Activated T-helper 2 cell treated with anti-CD3 and anti-CD28 coated beads, Interferon-gamma antibody, Interleukin-2, Interleukin-4, amounts not matched to agents 10 μg/mL and 5 μg/mL and 100 μg/mL, durations not matched to agents 14 hours and 24 hours and 36 hours (primary cell): ENCODE measurements at regions of chr2 and their contacts with region 1.

Region 1: DNA sequence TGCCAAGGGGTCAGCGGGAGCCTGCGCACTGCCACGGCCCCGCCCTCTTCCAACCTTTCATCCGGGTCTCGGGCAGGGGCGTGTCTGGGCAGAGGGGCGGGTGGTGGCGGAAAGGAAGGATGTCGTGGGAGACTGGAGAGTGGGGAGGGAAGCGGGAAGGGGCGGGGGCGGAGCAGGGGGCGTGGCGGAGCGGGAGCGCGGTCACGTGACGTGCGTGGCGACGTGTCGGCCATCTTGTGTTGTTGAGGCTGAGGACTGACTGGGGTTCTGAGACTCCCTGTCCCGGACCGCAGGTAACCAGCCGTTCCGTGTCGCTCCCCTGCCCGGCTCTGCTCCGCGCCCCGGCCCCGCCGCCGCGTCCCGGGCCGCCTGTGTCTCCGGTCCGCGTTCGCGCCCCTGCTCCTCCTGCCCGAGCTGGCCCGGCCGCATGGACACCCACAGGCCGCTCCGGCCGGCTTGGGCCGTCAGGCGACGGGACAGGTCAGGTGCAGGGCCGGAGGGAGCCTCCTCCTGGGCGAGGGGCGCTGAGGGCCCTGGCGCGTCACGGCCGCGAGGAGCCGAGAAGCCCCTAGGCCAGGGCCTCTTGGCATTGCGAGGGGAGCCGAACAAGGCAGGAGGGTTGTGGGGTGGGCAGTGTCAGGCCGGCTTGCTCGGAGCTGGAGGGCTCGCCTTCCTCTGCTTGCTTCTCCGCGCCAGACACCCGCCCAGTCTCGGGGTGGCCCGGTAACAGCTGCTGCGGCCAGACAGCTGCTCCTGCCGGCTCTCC is at the start of gene GIGYF2:
- DNase-seq: peak; percentile 89
- H3K4me3 Mint-ChIP-seq: peak within 1 kb of the TSS; percentile 98
- H3K27ac Mint-ChIP-seq: peak within 1 kb of the TSS; percentile 81
- H3K4me1 Mint-ChIP-seq: peaks cover 30% of the 10 kb centered on the region
- H3K27me3 Mint-ChIP-seq: peaks cover 5% of the 10 kb centered on the region
- total RNA-seq, gene GIGYF2: 63.7 and 64.7 TPM in 2 replicates

Region 2: DNA sequence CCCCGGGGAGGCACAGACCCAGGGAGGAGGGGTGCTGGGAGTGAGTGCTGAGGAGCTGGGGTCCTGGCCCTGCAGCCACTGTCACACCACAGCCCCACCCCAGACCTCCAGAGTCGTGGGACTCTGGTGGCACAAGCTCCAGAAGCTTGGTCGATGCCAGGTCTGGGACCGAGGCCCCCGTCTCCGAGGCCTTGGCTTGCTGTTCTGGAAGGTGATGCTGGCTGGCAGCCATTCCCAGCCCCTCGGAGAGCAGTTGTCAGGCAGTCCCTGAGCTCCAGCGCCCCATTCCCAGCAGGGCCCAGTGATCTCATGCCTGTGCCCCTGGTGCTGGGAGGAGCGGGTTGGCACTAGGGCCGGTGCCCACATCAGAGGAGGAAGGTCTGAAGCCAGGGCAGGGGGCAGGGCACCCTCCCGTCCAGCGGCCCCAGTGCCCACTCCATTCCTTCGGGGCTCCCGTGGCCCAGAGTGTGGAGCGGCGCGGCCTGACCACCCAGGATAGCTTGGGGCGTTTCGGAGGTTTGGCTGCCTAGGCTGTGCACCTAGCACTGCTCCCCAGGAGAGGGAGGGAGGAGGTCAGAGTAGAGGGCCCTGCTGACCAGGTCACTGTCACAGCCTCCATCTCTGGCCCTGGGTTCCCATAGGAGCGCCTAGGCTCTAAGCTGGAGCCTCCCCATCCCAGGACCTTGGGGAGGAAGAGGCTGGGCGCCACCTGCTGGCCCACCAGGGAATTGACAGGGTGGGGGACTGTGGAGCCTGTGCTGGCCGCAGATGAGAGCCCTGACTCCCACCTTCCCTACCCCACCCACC is 258.1 kb before region 1 on chr2:
- intact Hi-C with region 1: no loop called
- DNase-seq: peak; percentile 23
- H3K4me3 Mint-ChIP-seq: no peak overlapping the region
- H3K27ac Mint-ChIP-seq: no peak overlapping the region
- H3K4me1 Mint-ChIP-seq: peaks cover 4% of the 10 kb centered on the region
- H3K27me3 Mint-ChIP-seq: no peaks in the 10 kb centered on the region

Region 3: DNA sequence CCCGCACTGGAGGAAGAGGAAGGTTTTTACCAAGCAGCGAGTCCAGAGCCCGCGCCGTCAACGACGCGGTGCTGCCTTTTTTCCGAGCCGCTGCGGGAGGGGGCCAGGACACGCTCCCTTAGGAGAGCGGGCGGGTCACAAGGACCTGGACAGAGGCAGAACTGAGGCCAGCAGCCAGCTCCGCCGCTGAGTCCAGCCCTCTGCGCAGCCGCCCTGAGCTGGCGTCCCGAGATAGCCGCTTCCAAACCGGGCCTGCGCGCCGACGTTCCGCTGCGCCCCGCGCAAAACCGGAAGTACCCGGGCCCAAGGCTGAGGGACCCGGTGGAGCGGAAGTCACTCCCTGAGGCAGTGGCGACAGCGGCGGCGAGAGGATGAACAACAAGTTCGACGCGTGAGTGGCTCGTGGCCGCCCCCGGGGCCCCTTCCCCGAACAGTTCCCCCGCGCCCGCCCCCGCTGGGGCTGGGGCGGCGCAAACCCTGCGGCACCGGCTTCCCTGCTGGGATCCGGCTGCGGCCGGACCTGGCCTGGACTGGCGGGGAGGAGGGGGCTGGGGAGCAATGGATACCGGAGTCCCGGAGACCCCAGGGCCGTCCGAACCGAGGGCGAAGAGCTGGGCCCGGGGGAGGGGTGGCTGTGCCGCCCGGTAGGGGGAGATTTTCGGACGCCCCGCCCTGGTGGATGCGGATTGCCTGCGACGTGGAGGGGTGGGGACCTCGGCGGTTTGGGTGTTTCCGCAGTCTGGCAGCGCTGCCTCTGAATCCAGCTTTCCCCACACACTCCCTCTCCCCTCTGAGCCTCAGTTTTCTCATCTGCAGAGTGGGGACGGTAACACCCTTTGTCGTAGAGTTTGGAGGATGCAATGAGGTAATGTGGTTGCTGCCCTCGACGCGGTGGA is 146.7 kb before region 1 on chr2 and contains the starts of genes EIF4E2 and TIGD1:
- intact Hi-C with region 1: loop called (anchors 1 kb)
- DNase-seq: peak; percentile 88
- H3K4me3 Mint-ChIP-seq: peak within 1 kb of the TSS; percentile 99
- H3K27ac Mint-ChIP-seq: peak within 1 kb of the TSS; percentile 100
- H3K4me1 Mint-ChIP-seq: peaks cover 57% of the 10 kb centered on the region
- H3K27me3 Mint-ChIP-seq: no peaks in the 10 kb centered on the region
- total RNA-seq, gene EIF4E2: 85.0 and 88.4 TPM in 2 replicates
- total RNA-seq, gene TIGD1: 7.4 and 9.1 TPM in 2 replicates

Region 4: GRCh38 chr2:232611551-232612218 is 85.6 kb before region 1 on chr2:
- intact Hi-C with region 1: loop called (anchors 5 kb)
- DNase-seq: peak; percentile 48
- H3K4me3 Mint-ChIP-seq: no peak overlapping the region
- H3K27ac Mint-ChIP-seq: no peak overlapping the region
- H3K4me1 Mint-ChIP-seq: no peaks in the 10 kb centered on the region
- H3K27me3 Mint-ChIP-seq: no peaks in the 10 kb centered on the region

Region 5: GRCh38 chr2:233267516-233268245 is 570.4 kb after region 1 on chr2:
- intact Hi-C with region 1: loop called (anchors 10 kb)
- DNase-seq: peak; percentile 84
- H3K4me3 Mint-ChIP-seq: peak overlapping the region; percentile 66
- H3K27ac Mint-ChIP-seq: peak overlapping the region; percentile 93
- H3K4me1 Mint-ChIP-seq: peaks cover 61% of the 10 kb centered on the region
- H3K27me3 Mint-ChIP-seq: no peaks in the 10 kb centered on the region